ENCODE measurements at regions of chr7 and their contacts with region 1.

Region 1: GRCh38 chr7:149147072-149147751 is at the start of gene ZNF398:
- DNase-seq: peak in 1 of 2 donors; percentile 85
- H3K4me3 ChIP-seq: peak within 1 kb of the TSS; percentile 90 to 96
- H3K27ac ChIP-seq: peak within 1 kb of the TSS; percentile 80 to 92
- H3K4me1 ChIP-seq: peaks cover 0 to 14% of the 10 kb centered on the region in 2 donors
- H3K27me3 ChIP-seq: no peaks in the 10 kb centered on the region
- CTCF ChIP-seq: peak; percentile 48 to 77 (median 49)
- total RNA-seq, gene ZNF398: 19.6 TPM

Region 2: GRCh38 chr7:148753224-148753623 is 394.0 kb before region 1 on chr7:
- intact Hi-C with region 1: no loop called
- DNase-seq: no peak
- H3K4me3 ChIP-seq: no peak overlapping the region
- H3K27ac ChIP-seq: no peak overlapping the region
- H3K4me1 ChIP-seq: no peaks in the 10 kb centered on the region
- H3K27me3 ChIP-seq: no peaks in the 10 kb centered on the region
- CTCF ChIP-seq: no peak

Region 3: DNA sequence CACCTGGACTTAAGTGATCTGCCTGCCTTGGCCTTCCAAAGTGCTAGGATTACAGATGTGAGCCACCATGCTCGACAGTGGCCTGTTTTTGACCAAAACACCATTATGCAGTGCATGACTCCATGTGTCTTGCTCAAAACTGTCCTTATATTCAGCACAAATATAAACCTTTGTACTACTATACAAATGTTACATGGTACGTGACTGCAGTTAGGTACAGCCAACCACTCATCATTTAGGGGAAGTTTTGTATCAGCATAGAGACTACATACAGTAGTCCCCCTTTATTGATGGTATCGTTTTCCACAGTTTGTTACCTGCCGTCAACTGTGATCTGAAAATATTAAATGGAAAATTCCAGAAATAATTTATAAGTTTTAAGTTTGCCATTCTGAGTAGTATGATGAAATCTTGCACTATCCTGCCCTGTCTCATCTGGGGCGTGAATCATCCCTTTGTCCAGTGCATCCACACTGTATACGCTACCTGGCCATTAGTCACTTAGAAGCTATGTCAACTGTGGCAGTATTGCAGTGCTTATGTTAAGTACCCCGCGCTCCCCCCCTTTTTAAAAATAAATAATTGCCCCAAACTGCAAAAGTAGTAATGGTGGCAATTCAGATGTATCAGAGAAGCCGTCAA is 24.8 kb after region 1 on chr7:
- intact Hi-C with region 1: no loop called
- DNase-seq: no peak
- H3K4me3 ChIP-seq: no peak overlapping the region
- H3K27ac ChIP-seq: no peak overlapping the region
- H3K4me1 ChIP-seq: no peaks in the 10 kb centered on the region
- H3K27me3 ChIP-seq: no peaks in the 10 kb centered on the region
- CTCF ChIP-seq: no peak

Region 4: DNA sequence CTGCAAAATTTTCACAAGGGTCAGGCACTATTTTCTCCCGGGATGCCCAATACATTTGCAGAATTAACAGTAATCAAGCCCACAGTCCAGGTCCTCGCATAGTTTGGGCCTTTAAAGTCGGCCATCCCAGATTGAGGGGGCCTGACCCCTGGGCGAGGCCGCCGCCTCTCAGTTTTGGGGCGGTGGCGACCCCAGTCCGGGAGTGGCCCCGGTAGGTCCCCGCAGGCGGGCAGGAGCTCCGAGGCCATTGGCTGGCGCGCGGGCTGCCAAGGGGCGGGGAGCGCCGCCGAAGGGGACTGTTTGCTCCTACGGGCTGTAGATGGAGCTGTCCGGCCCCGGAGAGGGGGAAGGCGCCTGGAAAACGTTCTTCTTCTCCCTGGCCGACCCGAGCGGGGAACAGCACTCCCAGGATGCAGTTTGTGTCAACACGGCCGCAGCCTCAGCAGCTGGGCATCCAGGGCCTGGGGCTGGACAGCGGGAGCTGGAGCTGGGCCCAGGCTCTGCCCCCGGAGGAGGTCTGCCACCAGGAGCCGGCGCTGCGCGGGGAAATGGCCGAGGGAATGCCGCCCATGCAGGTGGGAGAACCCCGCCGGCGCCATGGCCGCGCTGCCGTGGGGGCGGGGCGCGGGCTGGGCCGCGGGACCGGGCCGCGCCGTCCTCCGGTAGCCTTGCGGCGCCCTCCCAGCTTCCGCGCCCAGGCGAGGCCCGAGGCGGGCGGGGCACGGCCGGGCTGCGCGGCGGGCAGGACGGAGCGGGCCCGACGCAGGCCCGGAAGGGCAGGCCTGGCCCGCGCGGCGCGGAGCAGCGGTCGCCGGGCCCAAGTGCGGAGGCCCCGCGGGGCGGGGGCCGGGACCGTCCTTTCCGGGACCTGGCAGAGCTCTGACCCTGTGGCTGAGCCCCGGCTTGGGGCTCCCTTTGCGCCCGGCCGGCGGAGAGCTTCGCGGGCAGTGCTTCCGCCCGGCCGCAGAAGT is 48.3 kb after region 1 on chr7 and contains the start of gene ZNF282:
- intact Hi-C with region 1: loop called (anchors 5 kb)
- DNase-seq: peak; percentile 56 to 96
- H3K4me3 ChIP-seq: peak within 1 kb of the TSS; percentile 79 to 98
- H3K27ac ChIP-seq: peak within 1 kb of the TSS; percentile 80 to 95
- H3K4me1 ChIP-seq: peaks cover 20 to 22% of the 10 kb centered on the region in 2 donors
- H3K27me3 ChIP-seq: no peaks in the 10 kb centered on the region
- CTCF ChIP-seq: peak; percentile 61 to 77 (median 66)
- total RNA-seq, gene ZNF282: 17.9 TPM

Region 5: DNA sequence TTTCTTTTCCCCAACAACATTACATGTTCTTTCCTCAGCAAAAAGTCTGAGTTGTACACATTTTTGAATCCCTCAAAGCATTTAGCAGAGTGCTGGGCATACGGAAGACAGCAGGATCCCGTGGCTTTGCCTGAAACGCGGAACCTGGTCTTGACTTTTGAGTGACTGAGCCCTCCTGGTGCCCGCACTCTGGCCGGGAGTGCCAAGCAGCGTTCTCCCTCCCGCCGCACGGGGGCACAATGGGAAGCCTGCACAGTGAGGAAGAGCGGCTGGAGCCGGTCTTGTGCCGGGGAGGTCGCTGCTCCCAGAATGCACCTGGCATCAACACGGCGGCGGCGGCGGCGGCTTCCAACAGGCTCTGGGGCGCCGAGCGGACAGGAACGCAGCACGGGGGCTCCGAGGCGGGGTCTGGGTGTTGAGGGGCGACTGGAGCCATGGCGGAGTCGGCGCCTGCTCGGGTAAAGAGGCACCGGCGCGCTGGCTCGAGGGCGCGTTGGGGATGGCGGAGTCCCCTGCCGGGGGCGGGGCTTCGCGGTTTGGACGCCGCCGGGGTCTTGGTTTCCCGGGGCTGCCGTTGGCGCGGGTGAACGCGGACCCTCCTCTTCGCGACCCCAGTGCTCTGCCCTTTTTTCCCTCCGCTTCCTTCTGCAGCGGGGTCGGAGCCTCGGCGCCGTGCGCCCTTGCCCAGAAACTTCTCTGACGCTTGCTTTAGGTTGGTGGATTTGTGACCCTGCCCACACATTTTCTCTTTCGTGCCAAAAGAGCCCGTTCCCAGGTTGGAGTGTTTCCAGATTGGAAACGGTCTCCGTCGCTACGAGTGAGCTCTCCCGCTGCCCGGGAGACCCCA is 92.4 kb after region 1 on chr7 and contains the start of gene ZNF212:
- intact Hi-C with region 1: loop called (anchors 1 kb)
- DNase-seq: peak; percentile 62 to 95
- H3K4me3 ChIP-seq: peak within 1 kb of the TSS; percentile 84 to 95
- H3K27ac ChIP-seq: peak within 1 kb of the TSS; percentile 42 to 61
- H3K4me1 ChIP-seq: peaks cover 6 to 12% of the 10 kb centered on the region in 2 donors
- H3K27me3 ChIP-seq: no peaks in the 10 kb centered on the region
- CTCF ChIP-seq: peak; percentile 73 to 89 (median 78)
- total RNA-seq, gene ZNF212: 5.2 TPM